ENCODE measurements at regions of chr6 and their contacts with region 1.

Region 1: GRCh38 chr6:48213076-48213788 is 102.2 kb upstream of the PTCHD4 start:
- DNase-seq: no peak
- ATAC-seq: no peak
- H3K4me3 ChIP-seq: no peak overlapping the region
- H3K4me3 Mint-ChIP-seq: no peak overlapping the region
- H3K27ac ChIP-seq: no peak overlapping the region
- H3K27ac Mint-ChIP-seq: no peak overlapping the region
- H3K4me1 ChIP-seq: no peaks in the 10 kb centered on the region
- H3K4me1 Mint-ChIP-seq: no peaks in the 10 kb centered on the region
- H3K27me3 ChIP-seq: no peaks in the 10 kb centered on the region
- H3K27me3 Mint-ChIP-seq: no peaks in the 10 kb centered on the region
- CTCF ChIP-seq: no peak

Region 2: DNA sequence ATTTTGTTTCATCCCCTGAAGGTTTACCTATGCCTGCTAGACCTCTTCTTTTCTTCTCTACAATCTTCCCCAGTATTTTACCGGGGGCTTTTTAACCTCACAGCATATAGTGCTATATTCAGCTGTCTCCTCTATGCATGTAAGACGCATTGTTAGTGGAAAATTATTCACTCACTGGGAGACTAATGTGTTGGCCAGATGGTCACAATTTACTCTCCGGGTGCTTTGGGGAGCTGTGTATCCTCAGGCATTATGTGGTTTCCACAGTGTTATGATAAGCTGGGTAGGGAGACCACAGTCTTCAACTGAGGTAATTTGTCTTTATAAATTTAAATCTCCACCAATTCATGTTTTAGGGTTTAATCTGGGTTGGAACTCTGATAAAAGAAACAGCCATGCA is 451.6 kb after region 1 on chr6:
- CTCF ChIA-PET with region 1: no interaction called
- POLR2A ChIA-PET with region 1: no interaction called
- intact Hi-C with region 1: loop called in 1 of 2 experiments (anchors 5 kb)
- DNase-seq: no peak
- ATAC-seq: no peak
- H3K4me3 ChIP-seq: no peak overlapping the region
- H3K4me3 Mint-ChIP-seq: no peak overlapping the region
- H3K27ac ChIP-seq: no peak overlapping the region
- H3K27ac Mint-ChIP-seq: no peak overlapping the region
- H3K4me1 ChIP-seq: no peaks in the 10 kb centered on the region
- H3K4me1 Mint-ChIP-seq: no peaks in the 10 kb centered on the region
- H3K27me3 ChIP-seq: no peaks in the 10 kb centered on the region
- H3K27me3 Mint-ChIP-seq: no peaks in the 10 kb centered on the region
- CTCF ChIP-seq: no peak